MCF 10A (cell line): ENCODE measurements at regions of chr14 and their contacts with region 1.

Region 1: GRCh38 chr14:73759714-73760597 is 45.8 kb upstream of the PNMA1 start:
- DNase-seq: peak; percentile 98
- H3K4me3 Mint-ChIP-seq: peak overlapping the region; percentile 86
- H3K27ac Mint-ChIP-seq: peak overlapping the region; percentile 97
- H3K4me1 Mint-ChIP-seq: peaks cover 35% of the 10 kb centered on the region
- H3K27me3 Mint-ChIP-seq: no peaks in the 10 kb centered on the region
- CTCF ChIP-seq: peak; percentile 5

Region 2: DNA sequence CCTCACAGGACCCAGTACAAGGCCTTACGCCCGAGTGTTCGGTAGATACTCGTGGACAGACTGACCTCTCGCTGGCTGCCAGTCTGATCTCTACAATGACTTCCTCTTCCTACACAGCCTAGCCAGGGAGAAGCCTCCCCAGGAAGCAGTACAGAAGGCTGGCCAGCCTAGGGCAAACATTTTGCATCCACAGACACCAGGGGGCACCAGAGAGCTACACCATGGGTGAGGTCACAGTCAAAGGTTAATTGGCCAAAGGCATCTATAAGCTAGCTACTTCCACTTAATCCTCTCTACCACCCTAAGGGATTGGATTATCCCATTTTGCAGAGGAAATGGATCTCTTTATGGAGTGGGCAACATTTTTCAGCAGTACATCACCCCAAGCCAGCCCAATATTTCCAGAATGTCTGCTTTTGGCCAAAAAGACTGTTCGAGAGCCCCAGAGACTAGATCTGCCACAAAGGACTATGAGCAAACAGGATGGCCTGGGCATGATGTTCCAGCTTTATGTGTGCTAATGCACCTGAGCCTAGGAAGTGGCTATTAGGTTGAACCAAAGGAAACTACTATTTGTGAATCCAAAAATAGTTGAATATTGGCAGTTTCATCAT is 31.1 kb before region 1 on chr14:
- CTCF ChIA-PET with region 1: interaction called, 58 read pairs
- POLR2A ChIA-PET with region 1: interaction called, 189 read pairs
- intact Hi-C with region 1: loop called (anchors 1 kb)
- DNase-seq: peak; percentile 86
- H3K4me3 Mint-ChIP-seq: no peak overlapping the region
- H3K27ac Mint-ChIP-seq: peak overlapping the region; percentile 71
- H3K4me1 Mint-ChIP-seq: peaks cover 33% of the 10 kb centered on the region
- H3K27me3 Mint-ChIP-seq: no peaks in the 10 kb centered on the region
- CTCF ChIP-seq: peak; percentile 91

Region 3: GRCh38 chr14:73746520-73747378 is 13.2 kb before region 1 on chr14:
- CTCF ChIA-PET with region 1: interaction called, 24 read pairs
- POLR2A ChIA-PET with region 1: interaction called, 296 read pairs
- intact Hi-C with region 1: loop called (anchors 1 kb)
- DNase-seq: no peak
- H3K4me3 Mint-ChIP-seq: no peak overlapping the region
- H3K27ac Mint-ChIP-seq: peak overlapping the region; percentile 42
- H3K4me1 Mint-ChIP-seq: peaks cover 72% of the 10 kb centered on the region
- H3K27me3 Mint-ChIP-seq: no peaks in the 10 kb centered on the region
- CTCF ChIP-seq: no peak

Region 4: GRCh38 chr14:73780391-73780790 is 20.4 kb after region 1 on chr14:
- CTCF ChIA-PET with region 1: interaction called, 30 read pairs
- POLR2A ChIA-PET with region 1: interaction called, 480 read pairs
- intact Hi-C with region 1: no loop called
- DNase-seq: no peak
- H3K4me3 Mint-ChIP-seq: no peak overlapping the region
- H3K27ac Mint-ChIP-seq: no peak overlapping the region
- H3K4me1 Mint-ChIP-seq: peaks cover 24% of the 10 kb centered on the region
- H3K27me3 Mint-ChIP-seq: no peaks in the 10 kb centered on the region
- CTCF ChIP-seq: no peak

Region 5: GRCh38 chr14:73795972-73796371 is 36.0 kb after region 1 on chr14:
- CTCF ChIA-PET with region 1: interaction called, 23 read pairs
- POLR2A ChIA-PET with region 1: interaction called, 480 read pairs
- intact Hi-C with region 1: no loop called
- DNase-seq: peak; percentile 80
- H3K4me3 Mint-ChIP-seq: no peak overlapping the region
- H3K27ac Mint-ChIP-seq: peak overlapping the region; percentile 64
- H3K4me1 Mint-ChIP-seq: peaks cover 21% of the 10 kb centered on the region
- H3K27me3 Mint-ChIP-seq: no peaks in the 10 kb centered on the region
- CTCF ChIP-seq: no peak

Region 6: GRCh38 chr14:73825551-73826188 is 65.7 kb after region 1 on chr14:
- CTCF ChIA-PET with region 1: interaction called, 20 read pairs
- POLR2A ChIA-PET with region 1: interaction called, 122 read pairs
- intact Hi-C with region 1: loop called (anchors 1 kb)
- DNase-seq: peak; percentile 89
- H3K4me3 Mint-ChIP-seq: no peak overlapping the region
- H3K27ac Mint-ChIP-seq: no peak overlapping the region
- H3K4me1 Mint-ChIP-seq: peaks cover 19% of the 10 kb centered on the region
- H3K27me3 Mint-ChIP-seq: no peaks in the 10 kb centered on the region
- CTCF ChIP-seq: peak; percentile 89

Region 7: DNA sequence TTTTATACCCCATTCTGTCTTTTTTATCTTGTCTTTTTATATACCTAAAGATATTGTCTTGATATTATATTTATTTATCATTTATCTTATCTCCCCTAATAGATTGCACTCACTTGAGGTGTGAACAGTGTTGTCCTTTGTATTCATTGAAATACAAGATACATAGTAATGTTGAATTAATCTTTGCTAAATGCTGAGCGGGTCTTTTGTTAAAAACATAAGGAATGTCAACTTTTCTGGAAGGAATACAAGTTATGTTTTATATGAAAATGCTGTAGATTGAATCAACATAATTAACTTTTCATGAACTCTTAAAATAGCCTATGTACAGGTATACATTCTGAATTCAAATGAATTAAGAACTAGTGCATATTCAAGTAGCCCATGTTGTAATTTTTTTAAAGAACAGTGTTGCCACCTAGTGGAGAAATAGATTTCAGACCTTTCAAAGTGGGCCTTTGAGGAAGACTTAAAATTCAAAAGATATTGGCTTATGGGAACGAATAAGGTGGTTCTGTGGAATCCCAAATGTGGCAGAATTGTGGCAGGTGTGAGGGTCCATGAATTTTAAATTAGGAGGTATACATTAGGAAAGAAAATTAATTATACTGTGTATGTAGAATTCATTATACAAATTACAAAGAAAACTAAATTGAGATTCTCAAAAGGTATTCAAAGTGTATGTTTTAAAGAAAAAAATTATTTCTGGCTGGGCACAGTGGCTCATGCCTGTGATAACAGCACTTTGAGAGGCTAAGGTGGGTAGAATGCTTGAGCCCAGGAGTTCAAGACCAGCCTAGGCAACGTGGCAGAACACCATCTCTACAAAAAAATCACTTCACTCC is 278.3 kb after region 1 on chr14:
- CTCF ChIA-PET with region 1: no interaction called
- POLR2A ChIA-PET with region 1: no interaction called
- intact Hi-C with region 1: no loop called
- DNase-seq: peak; percentile 65
- H3K4me3 Mint-ChIP-seq: no peak overlapping the region
- H3K27ac Mint-ChIP-seq: no peak overlapping the region
- H3K4me1 Mint-ChIP-seq: no peaks in the 10 kb centered on the region
- H3K27me3 Mint-ChIP-seq: no peaks in the 10 kb centered on the region
- CTCF ChIP-seq: peak; percentile 76